Naive thymus-derived CD8-positive, alpha-beta T cell (primary cell): ENCODE measurements at regions of chr14 and their contacts with region 1.

Region 1: GRCh38 chr14:103562429-103563225 is at the starts of genes BAG5 and COA8:
- DNase-seq: peak; percentile 77 to 97 (median 86)
- ATAC-seq: peak; percentile 87
- H3K4me3 Mint-ChIP-seq: peak within 1 kb of the TSS; percentile 87 to 98 (median 94)
- H3K27ac Mint-ChIP-seq: peak within 1 kb of the TSS; percentile 91 to 96 (median 94)
- H3K4me1 Mint-ChIP-seq: peaks cover 22 to 73% (median 52%) of the 10 kb centered on the region in 4 donors
- H3K27me3 Mint-ChIP-seq: no peaks in the 10 kb centered on the region
- polyA plus RNA-seq, gene BAG5: 39.0 to 48.5 (median 47.5) TPM
- polyA plus RNA-seq, gene COA8: 47.3 to 72.0 (median 48.2) TPM

Region 2: DNA sequence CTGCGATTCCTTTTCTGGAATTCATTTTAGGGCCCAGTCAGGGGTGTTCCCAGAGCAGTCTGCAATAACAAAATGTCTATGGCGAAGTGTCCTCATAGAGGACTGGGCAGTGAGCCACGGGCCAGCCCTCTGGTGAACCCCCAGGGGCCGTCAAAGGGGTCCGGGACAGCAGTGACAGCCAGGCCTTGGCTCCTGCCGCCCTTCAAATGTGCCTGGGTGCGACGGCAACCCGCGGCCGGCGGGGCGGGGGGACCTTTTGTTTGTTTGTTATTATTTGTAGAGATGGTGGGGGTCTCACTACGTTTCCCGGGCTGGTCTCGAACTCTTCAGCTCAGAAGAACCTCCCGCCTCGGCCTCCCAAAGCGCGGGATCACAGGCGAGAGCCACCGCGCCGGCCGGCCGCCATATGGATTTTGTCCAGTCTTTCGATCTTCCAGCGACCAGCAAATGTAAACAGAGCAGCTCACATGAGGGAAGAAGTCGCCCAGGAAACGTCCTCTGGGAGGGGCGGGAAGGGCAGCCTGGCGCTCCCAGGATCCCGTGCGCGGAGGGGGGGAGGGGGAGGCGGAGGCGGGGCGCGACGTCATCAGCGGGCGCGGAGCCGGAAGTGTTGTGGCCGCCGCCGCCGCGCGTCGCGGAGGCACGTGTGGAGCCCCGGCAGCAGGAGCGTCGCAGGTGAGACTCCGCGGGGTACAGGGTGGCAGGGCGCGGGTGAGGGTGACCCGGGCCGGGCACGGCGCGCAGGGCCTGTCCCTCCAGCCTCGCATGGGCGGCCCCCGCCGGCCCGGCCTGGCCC is 33.8 kb before region 1 on chr14 and contains the start of gene TRMT61A:
- POLR2A ChIA-PET with region 1: interaction called, 11 read pairs
- DNase-seq: peak; percentile 61 to 86 (median 74)
- ATAC-seq: peak; percentile 92
- H3K4me3 Mint-ChIP-seq: peak within 1 kb of the TSS; percentile 88 to 95 (median 93)
- H3K27ac Mint-ChIP-seq: peak within 1 kb of the TSS; percentile 86 to 98 (median 96)
- H3K4me1 Mint-ChIP-seq: peaks cover 19 to 52% (median 42%) of the 10 kb centered on the region in 4 donors
- H3K27me3 Mint-ChIP-seq: peaks cover 0 to 3% (median 0%) of the 10 kb centered on the region in 5 donors
- polyA plus RNA-seq, gene TRMT61A: 6.7 to 11.2 (median 7.0) TPM

Region 3: DNA sequence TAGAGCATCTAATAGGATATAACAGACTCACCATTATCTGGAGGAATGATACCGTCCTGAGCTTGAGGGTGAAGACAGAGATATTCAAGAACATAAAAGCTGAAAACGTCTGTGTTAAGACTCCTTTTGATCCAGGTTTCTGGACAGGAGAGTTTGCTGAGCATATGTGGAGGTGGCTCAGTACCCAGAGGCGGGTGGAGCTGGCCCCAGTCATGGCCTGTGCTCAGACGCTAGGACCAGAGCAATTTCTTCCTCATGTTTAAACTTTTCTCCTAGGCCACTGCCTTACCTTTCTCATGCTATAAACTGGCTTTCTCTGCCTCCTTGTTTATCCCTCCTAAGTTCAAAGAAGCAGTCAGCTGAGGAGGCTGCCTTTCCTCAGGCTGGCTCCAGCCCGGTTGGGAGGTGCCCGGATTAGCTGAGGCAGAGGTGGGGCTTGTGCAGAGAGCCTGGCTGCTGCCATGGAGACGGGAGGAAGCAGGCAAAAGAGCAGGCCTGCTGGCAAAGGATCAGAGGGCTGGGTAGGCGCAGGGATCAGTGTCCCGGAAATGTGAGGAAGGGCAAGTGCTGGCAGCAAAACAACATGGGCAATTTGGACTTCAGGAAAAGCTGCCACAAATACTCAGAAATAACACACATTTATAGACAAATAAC is 13.9 kb after region 1 on chr14:
- POLR2A ChIA-PET with region 1: no interaction called
- DNase-seq: no peak
- ATAC-seq: no peak
- H3K4me3 Mint-ChIP-seq: no peak overlapping the region
- H3K27ac Mint-ChIP-seq: peak overlapping the region in 2 of 10 donors; percentile 34 to 60
- H3K4me1 Mint-ChIP-seq: no peaks in the 10 kb centered on the region
- H3K27me3 Mint-ChIP-seq: no peaks in the 10 kb centered on the region

Region 4: GRCh38 chr14:103628684-103629502 is 66.3 kb after region 1 on chr14 and contains the start of gene KLC1:
- POLR2A ChIA-PET with region 1: interaction called, 12 read pairs
- DNase-seq: peak; percentile 64 to 89 (median 84)
- ATAC-seq: peak; percentile 76 to 77
- H3K4me3 Mint-ChIP-seq: peak within 1 kb of the TSS; percentile 83 to 92 (median 87)
- H3K27ac Mint-ChIP-seq: peak within 1 kb of the TSS; percentile 72 to 94 (median 91)
- H3K4me1 Mint-ChIP-seq: peaks cover 14 to 67% (median 44%) of the 10 kb centered on the region in 4 donors
- H3K27me3 Mint-ChIP-seq: no peaks in the 10 kb centered on the region
- polyA plus RNA-seq, gene KLC1: 50.7 to 73.3 (median 58.2) TPM